Calu3 (cell line): ENCODE measurements at regions of chr4 and their contacts with region 1.

Region 1: GRCh38 chr4:47836641-47837093 is 1.2 kb downstream of the CORIN start:
- DNase-seq: peak; percentile 77
- H3K4me3 Mint-ChIP-seq: peak overlapping the region; percentile 93
- H3K27ac Mint-ChIP-seq: peak overlapping the region; percentile 39
- H3K4me1 Mint-ChIP-seq: no peaks in the 10 kb centered on the region
- H3K27me3 Mint-ChIP-seq: no peaks in the 10 kb centered on the region
- CTCF ChIP-seq: no peak

Region 2: GRCh38 chr4:47415719-47416118 is 420.9 kb before region 1 on chr4:
- CTCF ChIA-PET with region 1: no interaction called
- intact Hi-C with region 1: no loop called
- DNase-seq: no peak
- H3K4me3 Mint-ChIP-seq: no peak overlapping the region
- H3K27ac Mint-ChIP-seq: no peak overlapping the region
- H3K4me1 Mint-ChIP-seq: no peaks in the 10 kb centered on the region
- H3K27me3 Mint-ChIP-seq: peaks cover 14% of the 10 kb centered on the region
- CTCF ChIP-seq: no peak

Region 3: DNA sequence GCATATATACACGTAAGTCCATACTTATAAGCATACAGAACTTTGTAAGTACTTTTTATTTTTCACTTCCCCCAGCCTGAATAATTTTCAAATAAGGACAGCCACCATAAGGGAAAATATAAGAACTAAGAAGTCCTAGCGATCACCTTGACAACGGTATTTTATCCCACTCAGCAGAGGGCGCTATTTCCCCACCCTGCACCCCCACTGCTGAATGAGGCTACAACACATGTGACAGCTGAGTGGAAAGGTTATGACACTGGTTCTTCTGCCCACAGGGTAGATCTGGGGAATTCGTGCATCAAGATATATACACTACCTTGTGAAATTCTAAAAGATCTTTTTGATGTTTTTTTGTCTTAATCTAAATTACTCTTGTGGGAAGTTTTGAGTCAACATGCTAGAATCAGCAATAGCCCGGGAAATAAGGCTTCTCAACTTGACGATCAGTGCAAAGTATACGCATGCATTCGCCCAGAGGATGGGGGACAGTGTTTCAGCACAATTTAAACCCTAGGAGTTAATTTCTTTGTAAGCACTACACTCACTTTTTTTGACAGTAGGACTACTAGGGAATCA is 150.3 kb before region 1 on chr4:
- CTCF ChIA-PET with region 1: interaction called, 9 read pairs
- intact Hi-C with region 1: loop called (anchors 5 kb)
- DNase-seq: peak; percentile 43
- H3K4me3 Mint-ChIP-seq: no peak overlapping the region
- H3K27ac Mint-ChIP-seq: no peak overlapping the region
- H3K4me1 Mint-ChIP-seq: no peaks in the 10 kb centered on the region
- H3K27me3 Mint-ChIP-seq: peaks cover 11% of the 10 kb centered on the region
- CTCF ChIP-seq: peak; percentile 36

Region 4: GRCh38 chr4:47704693-47705325 is 131.9 kb before region 1 on chr4:
- CTCF ChIA-PET with region 1: interaction called, 28 read pairs
- intact Hi-C with region 1: loop called (anchors 1 kb)
- DNase-seq: peak; percentile 42
- H3K4me3 Mint-ChIP-seq: no peak overlapping the region
- H3K27ac Mint-ChIP-seq: no peak overlapping the region
- H3K4me1 Mint-ChIP-seq: peaks cover 6% of the 10 kb centered on the region
- H3K27me3 Mint-ChIP-seq: no peaks in the 10 kb centered on the region
- CTCF ChIP-seq: no peak

Region 5: GRCh38 chr4:47715716-47716416 is 120.8 kb before region 1 on chr4:
- CTCF ChIA-PET with region 1: interaction called, 11 read pairs
- intact Hi-C with region 1: no loop called
- DNase-seq: no peak
- H3K4me3 Mint-ChIP-seq: no peak overlapping the region
- H3K27ac Mint-ChIP-seq: no peak overlapping the region
- H3K4me1 Mint-ChIP-seq: no peaks in the 10 kb centered on the region
- H3K27me3 Mint-ChIP-seq: peaks cover 5% of the 10 kb centered on the region
- CTCF ChIP-seq: no peak

Region 6: GRCh38 chr4:47933840-47934239 is 97.2 kb after region 1 on chr4:
- CTCF ChIA-PET with region 1: interaction called, 8 read pairs
- intact Hi-C with region 1: loop called (anchors 1 kb)
- DNase-seq: no peak
- H3K4me3 Mint-ChIP-seq: no peak overlapping the region
- H3K27ac Mint-ChIP-seq: no peak overlapping the region
- H3K4me1 Mint-ChIP-seq: peaks cover 13% of the 10 kb centered on the region
- H3K27me3 Mint-ChIP-seq: no peaks in the 10 kb centered on the region
- CTCF ChIP-seq: peak; percentile 32

Region 7: GRCh38 chr4:48079972-48080391 is 243.3 kb after region 1 on chr4:
- CTCF ChIA-PET with region 1: no interaction called
- intact Hi-C with region 1: loop called (anchors 10 kb)
- DNase-seq: peak; percentile 45
- H3K4me3 Mint-ChIP-seq: peak overlapping the region; percentile 66
- H3K27ac Mint-ChIP-seq: peak overlapping the region; percentile 97
- H3K4me1 Mint-ChIP-seq: peaks cover 70% of the 10 kb centered on the region
- H3K27me3 Mint-ChIP-seq: no peaks in the 10 kb centered on the region
- CTCF ChIP-seq: no peak